GM12878 (cell line): ENCODE measurements at regions of chr15 and their contacts with region 1.

Region 1: DNA sequence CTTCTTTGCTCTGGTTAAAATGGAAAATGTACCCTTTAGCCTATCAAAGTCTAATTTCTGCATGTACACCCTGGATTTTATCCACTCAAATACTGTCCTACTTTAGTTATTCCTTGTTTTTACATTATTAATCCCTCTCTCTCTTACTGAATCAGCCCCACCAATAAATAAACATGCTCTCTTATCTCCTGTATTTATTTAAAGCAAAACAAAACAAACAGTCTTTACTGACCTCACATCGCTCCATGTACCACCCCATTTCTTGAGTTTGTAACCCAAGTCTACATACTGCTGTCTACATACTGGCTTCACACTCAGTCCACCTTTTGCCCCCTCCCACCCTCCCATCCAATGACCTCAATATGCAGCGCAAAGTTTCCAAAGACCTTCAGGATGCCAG is 113.3 kb upstream of the RORA start:
- DNase-seq: no peak
- ATAC-seq: no peak
- H3K4me3 ChIP-seq: no peak overlapping the region
- H3K27ac ChIP-seq: no peak overlapping the region
- H3K4me1 ChIP-seq: no peaks in the 10 kb centered on the region
- H3K27me3 ChIP-seq: no peaks in the 10 kb centered on the region
- CTCF ChIP-seq: no peak
- EP300 ChIP-seq: no peak
- POLR2A ChIP-seq: no peak
- RAD21 ChIP-seq: no peak

Region 2: GRCh38 chr15:61282661-61283060 is 59.7 kb before region 1 on chr15:
- CTCF ChIA-PET with region 1: no interaction called
- POLR2A ChIA-PET with region 1: no interaction called
- RAD21 ChIA-PET with region 1: no interaction called
- SMC1A ChIA-PET with region 1: no interaction called
- in situ Hi-C with region 1: no loop called
- intact Hi-C with region 1: loop called (anchors 10 kb)
- DNase-seq: no peak
- ATAC-seq: no peak
- H3K4me3 ChIP-seq: no peak overlapping the region
- H3K27ac ChIP-seq: no peak overlapping the region
- H3K4me1 ChIP-seq: no peaks in the 10 kb centered on the region
- H3K27me3 ChIP-seq: no peaks in the 10 kb centered on the region
- CTCF ChIP-seq: no peak
- EP300 ChIP-seq: no peak
- POLR2A ChIP-seq: no peak
- RAD21 ChIP-seq: no peak

Region 3: DNA sequence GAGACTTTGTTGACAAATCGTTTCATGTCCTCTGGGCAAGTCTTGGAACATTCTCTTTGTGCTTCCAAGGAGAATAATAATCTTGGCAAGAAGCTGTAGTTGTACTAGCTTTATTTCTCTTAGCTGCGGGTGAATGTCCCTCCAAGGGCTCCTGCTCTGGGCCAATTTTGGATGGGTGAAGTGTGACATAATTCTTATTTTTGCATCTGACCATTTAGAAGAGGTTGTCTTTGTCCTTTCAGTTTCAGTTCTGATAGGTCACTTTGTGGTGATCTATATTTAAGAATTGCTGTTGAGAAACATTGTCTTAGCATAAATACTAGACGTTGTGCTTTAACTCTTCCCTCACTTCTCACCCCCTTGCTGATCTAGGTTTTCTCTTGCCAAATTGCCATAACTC is 51.6 kb after region 1 on chr15:
- CTCF ChIA-PET with region 1: no interaction called
- POLR2A ChIA-PET with region 1: no interaction called
- RAD21 ChIA-PET with region 1: no interaction called
- SMC1A ChIA-PET with region 1: no interaction called
- in situ Hi-C with region 1: no loop called
- intact Hi-C with region 1: no loop called
- DNase-seq: no peak
- ATAC-seq: peak; percentile 73
- H3K4me3 ChIP-seq: no peak overlapping the region
- H3K27ac ChIP-seq: no peak overlapping the region
- H3K4me1 ChIP-seq: no peaks in the 10 kb centered on the region
- H3K27me3 ChIP-seq: no peaks in the 10 kb centered on the region
- CTCF ChIP-seq: no peak
- EP300 ChIP-seq: no peak
- POLR2A ChIP-seq: no peak
- RAD21 ChIP-seq: no peak